PC-3 (cell line): ENCODE measurements at regions of chr20 and their contacts with region 1.

Region 1: GRCh38 chr20:5788385-5788895 is 38.2 kb downstream of the SHLD1 start:
- DNase-seq: peak; percentile 95
- ATAC-seq: peak; percentile 78
- H3K4me3 ChIP-seq: no peak overlapping the region
- H3K27ac ChIP-seq: peak overlapping the region; percentile 3; the same call in 1 of the 2 replicates
- H3K4me1 ChIP-seq: peaks cover 20% of the 10 kb centered on the region
- H3K27me3 ChIP-seq: no peaks in the 10 kb centered on the region
- CTCF ChIP-seq: peak; percentile 96

Region 2: DNA sequence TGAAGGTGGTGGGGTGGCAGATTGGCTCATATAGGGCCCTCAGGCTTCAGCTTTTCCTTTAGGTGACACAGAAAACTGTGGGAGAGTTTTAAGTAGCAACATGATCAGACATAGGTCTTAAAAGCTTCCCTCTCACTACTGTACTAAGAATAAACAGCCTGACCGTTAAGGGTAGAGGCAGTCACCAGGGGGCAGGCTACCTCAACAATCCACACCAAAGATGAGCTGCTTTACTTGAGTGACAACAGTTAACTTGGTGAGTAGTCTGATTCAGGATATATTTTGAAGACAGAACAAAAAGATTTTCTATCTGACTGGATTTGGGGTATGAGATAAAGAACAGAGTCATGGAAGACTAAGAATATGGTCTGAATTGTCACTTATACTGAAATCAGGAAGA is 231.3 kb before region 1 on chr20:
- CTCF ChIA-PET with region 1: interaction called, 12 read pairs
- POLR2A ChIA-PET with region 1: no interaction called
- intact Hi-C with region 1: loop called (anchors 1 kb)
- DNase-seq: peak; percentile 66
- ATAC-seq: peak; percentile 94
- H3K4me3 ChIP-seq: no peak overlapping the region
- H3K27ac ChIP-seq: no peak overlapping the region
- H3K4me1 ChIP-seq: no peaks in the 10 kb centered on the region
- H3K27me3 ChIP-seq: no peaks in the 10 kb centered on the region
- CTCF ChIP-seq: peak; percentile 88

Region 3: GRCh38 chr20:5608442-5609161 is 179.8 kb before region 1 on chr20:
- CTCF ChIA-PET with region 1: interaction called, 12 read pairs
- POLR2A ChIA-PET with region 1: no interaction called
- intact Hi-C with region 1: no loop called
- DNase-seq: peak; percentile 63
- ATAC-seq: 0 out of 2 replicates have a peak, but pooled peaks have one; percentile 6
- H3K4me3 ChIP-seq: peak overlapping the region; percentile 77
- H3K27ac ChIP-seq: peak overlapping the region; percentile 71
- H3K4me1 ChIP-seq: peaks cover 40% of the 10 kb centered on the region
- H3K27me3 ChIP-seq: no peaks in the 10 kb centered on the region
- CTCF ChIP-seq: no peak

Region 4: DNA sequence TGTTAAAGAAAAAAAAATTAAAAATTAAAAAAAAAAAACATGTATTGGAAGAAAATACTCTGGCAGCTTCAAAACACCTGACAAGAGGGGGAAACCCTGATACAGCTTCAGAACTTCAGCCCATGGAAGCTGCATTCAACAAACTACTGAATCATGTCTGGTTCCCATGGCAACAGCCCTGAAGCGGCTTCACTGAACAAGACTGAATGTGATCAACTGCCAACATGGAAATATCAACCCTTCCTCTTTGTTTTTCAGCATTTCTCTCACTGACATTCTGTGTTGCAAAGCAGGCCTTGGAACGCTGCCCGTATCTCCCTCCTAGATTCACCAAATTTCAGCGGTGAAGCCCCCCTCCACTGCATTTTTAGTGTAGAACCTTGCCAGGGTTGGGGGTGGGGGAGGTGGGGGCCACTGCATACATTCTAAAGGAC is 129.5 kb before region 1 on chr20:
- CTCF ChIA-PET with region 1: no interaction called
- POLR2A ChIA-PET with region 1: interaction called, 10 read pairs
- intact Hi-C with region 1: loop called (anchors 1 kb)
- DNase-seq: peak; percentile 12
- ATAC-seq: no peak
- H3K4me3 ChIP-seq: no peak overlapping the region
- H3K27ac ChIP-seq: no peak overlapping the region
- H3K4me1 ChIP-seq: peaks cover 36% of the 10 kb centered on the region
- H3K27me3 ChIP-seq: no peaks in the 10 kb centered on the region
- CTCF ChIP-seq: no peak

Region 5: GRCh38 chr20:5719861-5720401 is 68.5 kb before region 1 on chr20:
- CTCF ChIA-PET with region 1: interaction called, 3 read pairs
- POLR2A ChIA-PET with region 1: no interaction called
- intact Hi-C with region 1: loop called (anchors 5 kb)
- DNase-seq: peak; percentile 92
- ATAC-seq: peak; percentile 32
- H3K4me3 ChIP-seq: no peak overlapping the region
- H3K27ac ChIP-seq: peak overlapping the region; percentile 50
- H3K4me1 ChIP-seq: peaks cover 40% of the 10 kb centered on the region
- H3K27me3 ChIP-seq: no peaks in the 10 kb centered on the region
- CTCF ChIP-seq: no peak

Region 6: DNA sequence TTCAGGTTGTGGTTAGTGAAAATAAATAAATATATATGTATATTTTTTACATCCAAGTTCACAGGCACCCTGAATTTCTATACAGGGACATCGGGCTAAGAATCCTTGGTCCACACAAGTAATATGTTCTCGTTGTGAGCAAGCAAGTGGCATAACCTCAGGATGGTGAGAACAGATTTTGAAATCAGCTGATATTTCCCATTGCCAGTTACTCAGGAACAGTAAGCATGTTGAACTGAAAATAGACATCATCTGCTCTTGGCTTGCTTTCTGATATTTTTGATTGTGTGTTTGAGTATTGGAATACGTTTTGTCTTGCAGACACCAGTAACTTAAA is 74.2 kb after region 1 on chr20:
- CTCF ChIA-PET with region 1: interaction called, 11 read pairs
- POLR2A ChIA-PET with region 1: interaction called, 5 read pairs
- intact Hi-C with region 1: no loop called
- DNase-seq: no peak
- ATAC-seq: no peak
- H3K4me3 ChIP-seq: no peak overlapping the region
- H3K27ac ChIP-seq: no peak overlapping the region
- H3K4me1 ChIP-seq: peaks cover 24% of the 10 kb centered on the region
- H3K27me3 ChIP-seq: no peaks in the 10 kb centered on the region
- CTCF ChIP-seq: no peak

Region 7: DNA sequence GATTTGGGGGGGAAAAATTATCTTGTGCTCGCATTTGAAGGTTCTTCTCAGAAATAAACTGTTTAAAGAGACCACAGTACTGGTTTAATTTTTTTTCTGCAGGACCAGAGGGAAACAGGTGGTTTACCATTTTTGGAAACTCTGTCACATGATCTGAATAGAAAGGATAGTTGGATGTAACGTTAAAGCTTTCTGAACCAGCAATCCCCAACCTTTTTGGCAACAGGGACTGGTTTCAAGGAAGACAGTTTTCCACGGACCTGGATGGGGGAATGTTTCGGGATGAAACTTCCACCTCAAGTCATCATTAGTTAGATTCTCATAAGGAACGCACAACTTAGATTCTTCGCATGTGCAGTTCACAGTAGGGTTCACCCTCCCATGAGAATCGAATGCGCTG is 212.4 kb after region 1 on chr20:
- CTCF ChIA-PET with region 1: no interaction called
- POLR2A ChIA-PET with region 1: no interaction called
- intact Hi-C with region 1: loop called (anchors 5 kb)
- DNase-seq: no peak
- ATAC-seq: no peak
- H3K4me3 ChIP-seq: no peak overlapping the region
- H3K27ac ChIP-seq: no peak overlapping the region
- H3K4me1 ChIP-seq: peaks cover 8% of the 10 kb centered on the region; the same call in 1 of the 2 replicates
- H3K27me3 ChIP-seq: no peaks in the 10 kb centered on the region
- CTCF ChIP-seq: no peak